Activated B cell treated with CpG ODN at 0.5 μM for 24 hours (primary cell): ENCODE measurements at regions of chr2 and their contacts with region 1.

Region 1: DNA sequence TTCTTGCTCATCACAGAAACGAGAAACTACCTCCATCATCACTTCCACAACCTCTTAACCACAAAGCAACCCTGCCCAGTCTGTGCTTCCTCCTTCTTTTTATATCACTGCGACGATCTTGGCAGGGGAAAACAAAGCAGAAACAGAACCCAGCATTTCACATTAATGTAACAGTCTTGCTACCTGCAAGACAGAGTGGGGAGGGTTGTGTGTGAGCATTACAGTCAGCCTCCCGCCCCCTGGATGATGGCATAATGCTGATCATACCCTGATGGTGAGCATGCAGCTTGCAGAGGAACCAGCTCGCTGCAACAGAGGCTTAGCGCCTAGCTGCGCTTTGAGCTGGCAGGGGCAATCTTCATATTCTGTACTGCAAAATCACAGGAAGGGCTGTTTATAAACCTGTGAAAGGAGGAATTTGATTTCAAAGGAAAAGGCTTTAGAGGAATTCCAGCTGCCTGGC is 376.1 kb downstream of the IRS1 start:
- DNase-seq: peak; percentile 28
- ATAC-seq: peak; percentile 85
- H3K4me3 Mint-ChIP-seq: peak overlapping the region; percentile 72
- H3K27ac Mint-ChIP-seq: peak overlapping the region; percentile 13
- H3K4me1 Mint-ChIP-seq: peaks cover 37% of the 10 kb centered on the region
- H3K27me3 Mint-ChIP-seq: no peaks in the 10 kb centered on the region
- CTCF ChIP-seq: no peak

Region 2: GRCh38 chr2:226772389-226773179 is 349.1 kb after region 1 on chr2:
- CTCF ChIA-PET with region 1: no interaction called
- POLR2A ChIA-PET with region 1: no interaction called
- intact Hi-C with region 1: loop called (anchors 1 kb)
- DNase-seq: no peak
- ATAC-seq: peak; percentile 83
- H3K4me3 Mint-ChIP-seq: peak overlapping the region; percentile 35
- H3K27ac Mint-ChIP-seq: peak overlapping the region; percentile 71
- H3K4me1 Mint-ChIP-seq: peaks cover 49% of the 10 kb centered on the region
- H3K27me3 Mint-ChIP-seq: no peaks in the 10 kb centered on the region
- CTCF ChIP-seq: no peak